Stomach (tissue), 19 donors: ENCODE measurements at regions of chr9 and their contacts with region 1.

Region 1: DNA sequence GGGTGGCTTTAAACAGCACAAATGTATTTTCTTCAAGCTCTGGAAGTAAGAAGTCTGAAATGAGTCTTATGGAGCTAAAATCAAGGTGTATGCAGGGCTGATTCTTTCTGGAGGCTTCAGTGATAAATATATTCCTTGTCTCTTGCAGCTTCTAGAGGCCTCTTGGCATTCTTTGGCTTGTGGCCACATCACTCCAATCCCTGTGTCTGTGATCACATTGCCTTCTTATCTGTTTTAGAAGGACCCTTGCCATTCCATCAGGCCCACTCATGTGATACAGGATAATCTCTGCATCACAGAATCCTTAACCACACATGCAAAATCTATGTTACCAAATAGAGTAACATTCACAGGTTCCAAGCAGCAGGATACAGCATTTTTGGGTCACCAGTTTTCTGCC is 917.8 kb upstream of the C9orf72 start:
- DNase-seq: no peak
- H3K4me3 ChIP-seq: no peak overlapping the region
- H3K27ac ChIP-seq: no peak overlapping the region
- H3K4me1 ChIP-seq: no peaks in the 10 kb centered on the region
- H3K27me3 ChIP-seq: no peaks in the 10 kb centered on the region
- CTCF ChIP-seq: no peak
- EP300 ChIP-seq: no peak
- POLR2A ChIP-seq: no peak

Region 2: GRCh38 chr9:28443461-28443860 is 47.7 kb before region 1 on chr9:
- intact Hi-C with region 1: no loop called
- DNase-seq: no peak
- H3K4me3 ChIP-seq: no peak overlapping the region
- H3K27ac ChIP-seq: no peak overlapping the region
- H3K4me1 ChIP-seq: no peaks in the 10 kb centered on the region
- H3K27me3 ChIP-seq: no peaks in the 10 kb centered on the region
- CTCF ChIP-seq: no peak
- EP300 ChIP-seq: no peak
- POLR2A ChIP-seq: no peak

Region 3: DNA sequence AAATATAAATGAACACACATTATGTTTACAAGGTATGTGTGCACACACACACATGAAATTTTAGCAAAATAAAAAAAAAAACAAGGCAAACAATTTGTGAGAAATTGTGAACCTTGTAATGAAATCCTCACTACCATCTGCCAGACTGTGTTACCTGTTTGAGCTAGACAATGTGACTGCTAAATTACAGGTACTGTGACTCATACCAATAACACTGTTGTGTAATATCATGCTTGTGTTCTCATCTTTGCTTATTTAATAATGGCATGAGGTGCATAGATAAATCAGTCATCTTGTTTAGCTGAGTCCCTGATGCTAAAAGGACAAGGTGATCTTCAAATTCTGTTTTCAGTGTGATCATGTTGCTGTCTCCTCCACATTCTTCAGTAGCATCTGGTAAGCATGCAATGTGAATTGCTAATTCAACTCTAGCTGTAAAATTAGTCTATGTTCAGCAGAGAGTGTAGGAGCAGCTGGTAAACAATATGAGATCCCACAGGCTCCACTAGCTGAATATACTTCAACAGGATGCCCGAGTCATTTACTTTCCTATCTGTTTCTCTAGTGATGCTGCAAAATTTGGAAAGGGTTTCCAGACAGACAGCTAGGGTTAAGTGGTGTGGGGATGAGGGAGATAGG is 48.4 kb after region 1 on chr9:
- intact Hi-C with region 1: loop called (anchors 5 kb)
- DNase-seq: no peak
- H3K4me3 ChIP-seq: no peak overlapping the region
- H3K27ac ChIP-seq: no peak overlapping the region
- H3K4me1 ChIP-seq: no peaks in the 10 kb centered on the region
- H3K27me3 ChIP-seq: no peaks in the 10 kb centered on the region
- CTCF ChIP-seq: no peak
- EP300 ChIP-seq: no peak
- POLR2A ChIP-seq: no peak